ENCODE measurements at regions of chr16 and their contacts with region 1.

Region 1: DNA sequence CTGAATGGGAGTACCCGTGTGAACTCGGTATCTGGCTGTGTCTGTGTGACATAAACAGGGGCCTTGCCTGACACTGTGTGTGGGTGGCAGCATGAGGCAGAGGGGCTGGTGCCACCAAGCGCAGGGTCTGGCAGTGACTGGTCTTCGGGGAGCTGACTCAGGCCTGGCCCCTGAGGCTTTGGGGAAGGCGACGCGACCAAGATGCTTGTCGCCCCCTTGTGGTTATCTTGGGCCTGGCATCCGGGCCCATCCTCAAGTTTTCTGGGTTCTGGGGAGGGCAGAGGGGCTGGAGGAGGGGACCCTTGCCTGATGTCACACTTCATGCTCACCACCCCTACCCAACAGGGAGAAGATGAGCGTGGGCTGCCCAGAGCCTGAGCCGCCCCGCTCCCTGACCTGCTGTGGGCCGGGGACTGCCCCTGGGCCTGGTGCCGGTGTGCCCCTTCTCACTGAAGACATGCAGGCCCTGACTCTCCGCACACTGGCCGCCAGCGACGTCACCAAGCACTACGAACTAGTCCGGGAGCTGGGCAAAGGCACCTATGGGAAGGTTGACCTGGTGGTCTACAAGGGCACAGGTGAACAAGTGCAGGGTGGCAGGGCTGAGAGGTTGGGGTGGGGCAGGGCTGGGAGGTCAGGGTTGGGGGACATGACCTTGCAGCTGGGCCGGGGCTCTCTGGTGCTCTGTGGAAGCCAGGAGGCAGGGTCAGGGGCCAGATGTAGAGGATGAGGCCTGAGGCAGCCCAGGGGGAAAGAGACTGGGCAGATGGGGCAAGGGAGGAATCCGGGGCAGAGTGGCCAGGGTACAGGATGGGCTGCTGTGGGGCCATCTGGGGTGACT is 24.9 kb downstream of the SBK1 start:
- DNase-seq: peak in 1 of 2 donors; percentile 53
- ATAC-seq: peak; percentile 58 to 79
- H3K4me3 ChIP-seq: no peak overlapping the region
- H3K27ac ChIP-seq: peak overlapping the region; percentile 36 to 78 (median 52)
- H3K4me1 ChIP-seq: peaks cover 0 to 4% of the 10 kb centered on the region in 2 donors
- H3K27me3 ChIP-seq: no peaks in the 10 kb centered on the region
- CTCF ChIP-seq: peak; percentile 81 to 91 (median 88)
- POLR2A ChIP-seq: no peak

Region 2: GRCh38 chr16:28277537-28278388 is 39.5 kb before region 1 on chr16:
- in situ Hi-C with region 1: loop called in 2 of 4 experiments (anchors 5 kb)
- intact Hi-C with region 1: loop called (anchors 1 kb)
- DNase-seq: peak; percentile 59 to 77
- ATAC-seq: peak; percentile 88 to 90
- H3K4me3 ChIP-seq: peak overlapping the region; percentile 46 to 64 (median 56)
- H3K27ac ChIP-seq: peak overlapping the region; percentile 55 to 71 (median 60)
- H3K4me1 ChIP-seq: peaks cover 0 to 9% of the 10 kb centered on the region in 2 donors
- H3K27me3 ChIP-seq: no peaks in the 10 kb centered on the region
- CTCF ChIP-seq: peak; percentile 92 to 98 (median 96)
- POLR2A ChIP-seq: no peak